ENCODE measurements at regions of chr13 and their contacts with region 1.

Region 1: DNA sequence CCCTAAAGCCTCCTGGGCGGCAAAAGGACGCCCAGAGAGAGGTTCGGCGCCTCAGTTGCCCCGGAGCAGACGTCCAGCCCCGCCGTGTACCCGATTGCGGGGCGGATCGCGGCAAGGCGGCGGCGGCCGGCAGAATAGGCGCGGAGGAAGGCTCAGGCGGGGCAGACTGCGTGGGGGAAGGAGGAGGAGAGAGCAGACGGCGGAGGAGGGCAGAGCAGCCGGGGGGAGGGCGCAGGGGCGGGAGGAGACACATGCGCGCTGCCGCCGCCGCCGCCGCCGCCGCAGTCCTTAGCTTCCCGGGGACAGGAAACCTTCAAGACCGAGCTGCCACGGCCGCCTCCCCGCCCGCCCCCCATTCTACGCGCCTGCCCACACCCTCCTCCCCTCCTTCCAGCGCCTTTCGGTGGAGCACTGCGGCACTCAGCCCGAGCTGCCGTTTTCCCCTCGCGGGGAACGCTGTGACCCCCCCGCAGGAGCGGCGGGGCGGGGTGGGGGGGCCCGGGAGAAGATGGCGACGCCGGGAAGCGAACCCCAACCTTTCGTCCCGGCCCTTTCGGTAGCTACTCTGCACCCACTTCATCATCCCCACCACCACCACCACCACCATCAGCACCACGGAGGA is at the start of gene LRCH1:
- DNase-seq: peak; percentile 79 to 90 (median 81)
- H3K4me3 ChIP-seq: peak within 1 kb of the TSS; percentile 85
- H3K4me3 Mint-ChIP-seq: peak within 1 kb of the TSS; percentile 93 to 97 (median 95)
- H3K27ac ChIP-seq: peak within 1 kb of the TSS; percentile 90
- H3K27ac Mint-ChIP-seq: peak within 1 kb of the TSS; percentile 90 to 98 (median 95)
- H3K4me1 ChIP-seq: peaks cover 34% of the 10 kb centered on the region
- H3K4me1 Mint-ChIP-seq: peaks cover 48 to 52% (median 51%) of the 10 kb centered on the region in 3 donors
- H3K27me3 ChIP-seq: no peaks in the 10 kb centered on the region
- H3K27me3 Mint-ChIP-seq: peaks cover 5 to 8% of the 10 kb centered on the region in 2 donors
- total RNA-seq, gene LRCH1: 16.7 to 17.8 TPM

Region 2: GRCh38 chr13:46603165-46603603 is 50.2 kb after region 1 on chr13:
- CTCF ChIA-PET with region 1: no interaction called
- POLR2A ChIA-PET with region 1: no interaction called
- DNase-seq: no peak
- H3K4me3 ChIP-seq: no peak overlapping the region
- H3K4me3 Mint-ChIP-seq: no peak overlapping the region
- H3K27ac ChIP-seq: no peak overlapping the region
- H3K27ac Mint-ChIP-seq: peak overlapping the region in 1 of 8 donors; percentile 8
- H3K4me1 ChIP-seq: peaks cover 40% of the 10 kb centered on the region
- H3K4me1 Mint-ChIP-seq: peaks cover 80 to 93% (median 91%) of the 10 kb centered on the region in 3 donors
- H3K27me3 ChIP-seq: no peaks in the 10 kb centered on the region
- H3K27me3 Mint-ChIP-seq: no peaks in the 10 kb centered on the region

Region 3: GRCh38 chr13:46655377-46656180 is 102.6 kb after region 1 on chr13:
- CTCF ChIA-PET with region 1: interaction called, 3 read pairs
- POLR2A ChIA-PET with region 1: interaction called, 19 read pairs
- DNase-seq: no peak
- H3K4me3 ChIP-seq: no peak overlapping the region
- H3K4me3 Mint-ChIP-seq: no peak overlapping the region
- H3K27ac ChIP-seq: no peak overlapping the region
- H3K27ac Mint-ChIP-seq: peak overlapping the region in 3 of 8 donors; percentile 21 to 47 (median 33)
- H3K4me1 ChIP-seq: peaks cover 15% of the 10 kb centered on the region
- H3K4me1 Mint-ChIP-seq: peaks cover 12 to 37% (median 29%) of the 10 kb centered on the region in 3 donors
- H3K27me3 ChIP-seq: no peaks in the 10 kb centered on the region
- H3K27me3 Mint-ChIP-seq: no peaks in the 10 kb centered on the region

Region 4: DNA sequence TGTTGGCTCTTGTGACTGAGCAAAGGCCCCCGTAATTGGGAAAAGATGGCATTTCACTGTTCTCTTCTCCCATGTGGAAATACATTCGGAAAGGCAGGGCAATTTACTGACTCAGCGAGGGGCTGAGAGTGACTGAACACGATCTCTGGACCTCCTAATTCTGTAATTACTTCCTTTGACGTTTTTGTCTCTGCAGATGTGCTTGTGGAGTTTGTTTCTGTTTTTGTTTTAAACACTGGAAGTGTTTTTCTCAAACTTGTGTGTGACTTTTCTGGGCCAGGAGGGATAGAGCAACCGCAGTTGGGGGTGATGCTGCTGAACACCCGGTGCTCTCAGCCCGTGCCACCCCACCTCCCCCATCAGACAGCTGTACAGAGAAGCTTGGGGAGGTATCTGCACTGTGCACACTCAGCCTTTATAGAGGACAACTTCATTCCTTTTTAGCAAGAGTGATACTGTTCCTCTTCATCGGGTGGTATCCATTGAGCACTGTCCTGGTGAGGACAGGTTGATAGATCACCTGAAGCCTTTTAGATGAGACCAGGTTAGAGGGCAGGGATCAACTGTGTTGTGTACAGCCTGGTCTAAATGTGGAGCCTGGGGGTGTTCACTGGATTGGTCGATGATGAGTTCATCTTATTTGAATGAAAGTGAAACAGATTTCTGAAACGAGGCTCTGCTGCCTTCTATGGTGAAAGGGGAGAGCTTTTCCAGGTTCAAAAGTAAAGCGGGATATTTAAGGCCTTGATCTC is 126.5 kb after region 1 on chr13:
- CTCF ChIA-PET with region 1: interaction called, 27 read pairs
- POLR2A ChIA-PET with region 1: no interaction called
- DNase-seq: peak; percentile 12 to 71 (median 47)
- H3K4me3 ChIP-seq: peak overlapping the region; percentile 33
- H3K4me3 Mint-ChIP-seq: no peak overlapping the region
- H3K27ac ChIP-seq: peak overlapping the region; percentile 17
- H3K27ac Mint-ChIP-seq: no peak overlapping the region
- H3K4me1 ChIP-seq: peaks cover 19% of the 10 kb centered on the region
- H3K4me1 Mint-ChIP-seq: peaks cover 7 to 21% (median 11%) of the 10 kb centered on the region in 3 donors
- H3K27me3 ChIP-seq: no peaks in the 10 kb centered on the region
- H3K27me3 Mint-ChIP-seq: no peaks in the 10 kb centered on the region

Region 5: GRCh38 chr13:46721054-46721453 is 168.1 kb after region 1 on chr13:
- CTCF ChIA-PET with region 1: interaction called, 26 read pairs
- POLR2A ChIA-PET with region 1: no interaction called
- DNase-seq: peak; percentile 6 to 58 (median 19)
- H3K4me3 ChIP-seq: no peak overlapping the region
- H3K4me3 Mint-ChIP-seq: no peak overlapping the region
- H3K27ac ChIP-seq: no peak overlapping the region
- H3K27ac Mint-ChIP-seq: no peak overlapping the region
- H3K4me1 ChIP-seq: no peaks in the 10 kb centered on the region
- H3K4me1 Mint-ChIP-seq: peaks cover 4 to 10% (median 7%) of the 10 kb centered on the region in 3 donors
- H3K27me3 ChIP-seq: no peaks in the 10 kb centered on the region
- H3K27me3 Mint-ChIP-seq: peaks cover 0 to 2% of the 10 kb centered on the region in 2 donors

Region 6: DNA sequence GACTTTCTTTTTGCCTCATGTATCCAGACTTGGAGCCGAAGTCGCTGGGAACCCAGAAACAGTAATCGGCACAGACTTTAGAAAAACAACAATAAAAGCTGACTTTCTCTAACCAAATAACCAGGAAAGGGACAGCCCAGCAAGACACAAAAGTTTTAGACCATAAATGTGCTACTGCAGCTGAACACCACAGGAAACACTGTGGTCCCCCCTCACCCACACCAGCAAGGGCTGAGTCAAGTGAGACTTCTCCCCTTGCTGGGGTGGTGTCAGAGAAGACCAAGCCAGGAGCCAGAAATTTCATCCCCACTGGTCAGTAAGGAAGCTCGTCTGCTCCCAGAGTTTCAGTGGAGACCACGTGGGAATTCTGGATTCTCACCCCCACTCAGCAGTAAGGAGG is 173.3 kb after region 1 on chr13:
- CTCF ChIA-PET with region 1: interaction called, 26 read pairs
- POLR2A ChIA-PET with region 1: no interaction called
- DNase-seq: no peak
- H3K4me3 ChIP-seq: no peak overlapping the region
- H3K4me3 Mint-ChIP-seq: peak overlapping the region in 1 of 7 donors; percentile 40
- H3K27ac ChIP-seq: no peak overlapping the region
- H3K27ac Mint-ChIP-seq: no peak overlapping the region
- H3K4me1 ChIP-seq: no peaks in the 10 kb centered on the region
- H3K4me1 Mint-ChIP-seq: peaks cover 8 to 20% (median 10%) of the 10 kb centered on the region in 3 donors
- H3K27me3 ChIP-seq: no peaks in the 10 kb centered on the region
- H3K27me3 Mint-ChIP-seq: peaks cover 0 to 2% of the 10 kb centered on the region in 2 donors

Measured in CD8-positive, alpha-beta memory T cell (primary cell).